Calu3 (cell line): ENCODE measurements at regions of chr16 and their contacts with region 1.

Region 1: DNA sequence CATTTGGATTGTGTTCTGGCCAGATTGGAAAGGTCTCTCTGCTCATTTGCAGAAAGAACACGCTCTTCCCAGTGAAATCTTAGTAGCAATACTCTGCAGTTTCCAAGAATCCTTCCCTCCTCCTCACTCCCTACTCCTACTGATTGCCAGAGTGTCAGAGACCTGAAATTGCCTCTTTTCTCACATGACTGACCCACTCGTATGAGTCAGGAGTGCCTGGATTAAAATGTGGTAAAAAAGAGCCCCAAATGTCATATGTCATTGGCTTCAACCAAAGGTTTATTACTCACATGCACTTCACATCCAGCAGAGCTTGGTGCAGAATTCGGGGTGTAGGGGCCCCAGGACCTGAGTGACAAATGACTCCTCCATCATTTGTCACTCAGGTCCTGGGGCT is 39.7 kb upstream of the IRX3 start:
- DNase-seq: no peak
- H3K4me3 Mint-ChIP-seq: no peak overlapping the region
- H3K27ac Mint-ChIP-seq: no peak overlapping the region
- H3K4me1 Mint-ChIP-seq: no peaks in the 10 kb centered on the region
- H3K27me3 Mint-ChIP-seq: peaks cover 86% of the 10 kb centered on the region
- CTCF ChIP-seq: no peak

Region 2: GRCh38 chr16:54344649-54345630 is 18.7 kb after region 1 on chr16:
- CTCF ChIA-PET with region 1: interaction called, 10 read pairs
- intact Hi-C with region 1: no loop called
- DNase-seq: no peak
- H3K4me3 Mint-ChIP-seq: no peak overlapping the region
- H3K27ac Mint-ChIP-seq: no peak overlapping the region
- H3K4me1 Mint-ChIP-seq: no peaks in the 10 kb centered on the region
- H3K27me3 Mint-ChIP-seq: peaks cover 31% of the 10 kb centered on the region
- CTCF ChIP-seq: no peak

Region 3: DNA sequence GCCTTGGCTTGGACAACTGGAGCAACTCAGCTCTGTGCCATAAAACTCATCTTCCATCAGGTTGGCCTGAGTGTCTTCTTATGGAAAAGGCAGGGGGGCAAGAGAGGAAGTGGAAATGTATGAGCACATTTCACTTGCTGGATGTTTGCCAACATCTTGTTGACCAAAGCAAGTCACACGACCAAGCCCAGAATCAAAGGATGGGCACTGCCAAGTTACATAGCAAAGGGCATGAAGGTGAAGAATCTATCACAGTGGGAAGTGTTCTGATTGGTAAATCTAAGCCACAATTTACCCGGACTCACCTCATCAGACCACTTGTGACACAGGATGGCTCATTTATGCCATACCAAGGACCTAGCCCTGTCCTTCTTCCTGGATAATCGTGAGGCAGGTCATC is 293.9 kb after region 1 on chr16:
- CTCF ChIA-PET with region 1: no interaction called
- intact Hi-C with region 1: no loop called
- DNase-seq: no peak
- H3K4me3 Mint-ChIP-seq: no peak overlapping the region
- H3K27ac Mint-ChIP-seq: no peak overlapping the region
- H3K4me1 Mint-ChIP-seq: no peaks in the 10 kb centered on the region
- H3K27me3 Mint-ChIP-seq: peaks cover 17% of the 10 kb centered on the region
- CTCF ChIP-seq: no peak